Activated B cell treated with CpG ODN at 0.5 μM for 24 hours (primary cell): ENCODE measurements at regions of chr2 and their contacts with region 1.

Region 1: GRCh38 chr2:100562732-100563720 is at the start of gene PDCL3:
- DNase-seq: peak; percentile 98
- ATAC-seq: peak; percentile 89
- H3K4me3 Mint-ChIP-seq: peak within 1 kb of the TSS; percentile 90
- H3K27ac Mint-ChIP-seq: peak within 1 kb of the TSS; percentile 98
- H3K4me1 Mint-ChIP-seq: peaks cover 21% of the 10 kb centered on the region
- H3K27me3 Mint-ChIP-seq: no peaks in the 10 kb centered on the region
- CTCF ChIP-seq: no peak
- total RNA-seq, gene PDCL3: 26.1 and 27.8 TPM in 2 replicates

Region 2: GRCh38 chr2:100142393-100142792 is 420.6 kb before region 1 on chr2 and contains the start of gene AFF3:
- CTCF ChIA-PET with region 1: no interaction called
- POLR2A ChIA-PET with region 1: interaction called, 5 read pairs
- intact Hi-C with region 1: loop called (anchors 5 kb)
- DNase-seq: peak; percentile 65
- ATAC-seq: peak; percentile 86
- H3K4me3 Mint-ChIP-seq: peak within 1 kb of the TSS; percentile 99
- H3K27ac Mint-ChIP-seq: peak within 1 kb of the TSS; percentile 99
- H3K4me1 Mint-ChIP-seq: peaks cover 47% of the 10 kb centered on the region
- H3K27me3 Mint-ChIP-seq: no peaks in the 10 kb centered on the region
- CTCF ChIP-seq: no peak
- total RNA-seq, gene AFF3: 228 and 271 TPM in 2 replicates

Region 3: GRCh38 chr2:100237770-100238169 is 325.3 kb before region 1 on chr2:
- CTCF ChIA-PET with region 1: no interaction called
- POLR2A ChIA-PET with region 1: no interaction called
- intact Hi-C with region 1: no loop called
- DNase-seq: no peak
- ATAC-seq: no peak
- H3K4me3 Mint-ChIP-seq: no peak overlapping the region
- H3K27ac Mint-ChIP-seq: no peak overlapping the region
- H3K4me1 Mint-ChIP-seq: peaks cover 74% of the 10 kb centered on the region
- H3K27me3 Mint-ChIP-seq: peaks cover 10% of the 10 kb centered on the region
- CTCF ChIP-seq: no peak

Region 4: DNA sequence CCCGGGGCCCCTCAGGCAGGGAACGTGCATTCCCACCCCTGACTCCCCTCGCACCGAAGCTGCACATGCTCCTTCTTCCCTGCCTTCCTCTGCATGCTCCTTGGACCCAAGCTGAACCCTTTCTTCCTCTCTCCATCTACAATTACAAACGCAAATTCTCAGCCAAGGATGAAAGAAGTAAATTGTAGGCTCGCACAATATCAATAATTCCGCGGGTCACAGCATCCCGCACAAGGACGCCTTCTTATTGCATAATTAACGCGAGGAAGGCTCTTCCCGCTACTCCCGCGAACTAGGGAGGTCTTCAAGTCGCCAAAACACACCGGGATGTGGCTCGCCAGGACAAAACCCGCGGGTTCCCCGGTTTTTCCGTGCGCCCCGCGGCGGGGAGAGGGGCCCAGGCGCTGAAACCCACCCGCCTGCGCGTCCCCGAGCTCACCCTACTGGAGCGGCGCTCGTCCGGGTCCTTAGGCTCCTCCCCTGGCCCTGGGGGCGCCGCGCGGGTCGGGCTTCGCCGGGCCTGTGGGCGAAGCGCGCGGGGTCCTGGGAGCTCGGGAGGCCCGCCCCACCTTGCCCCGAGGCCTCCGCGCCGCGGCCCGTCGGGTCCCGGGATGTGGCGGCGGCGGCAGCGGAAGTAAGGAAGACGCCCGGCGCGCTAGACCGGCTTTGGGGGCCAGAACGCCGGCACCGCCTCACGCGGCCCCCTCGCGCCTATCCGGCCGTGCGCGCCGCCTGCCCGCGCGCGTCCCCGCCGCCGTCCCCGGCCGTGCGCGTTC is 145.9 kb before region 1 on chr2 and contains the start of gene CHST10:
- CTCF ChIA-PET with region 1: no interaction called
- POLR2A ChIA-PET with region 1: interaction called, 5 read pairs
- intact Hi-C with region 1: loop called (anchors 2 kb)
- DNase-seq: peak; percentile 74
- ATAC-seq: peak; percentile 96
- H3K4me3 Mint-ChIP-seq: peak within 1 kb of the TSS; percentile 94
- H3K27ac Mint-ChIP-seq: peak within 1 kb of the TSS; percentile 80
- H3K4me1 Mint-ChIP-seq: peaks cover 18% of the 10 kb centered on the region
- H3K27me3 Mint-ChIP-seq: no peaks in the 10 kb centered on the region
- CTCF ChIP-seq: no peak
- total RNA-seq, gene CHST10: 19.8 and 21.0 TPM in 2 replicates

Region 5: DNA sequence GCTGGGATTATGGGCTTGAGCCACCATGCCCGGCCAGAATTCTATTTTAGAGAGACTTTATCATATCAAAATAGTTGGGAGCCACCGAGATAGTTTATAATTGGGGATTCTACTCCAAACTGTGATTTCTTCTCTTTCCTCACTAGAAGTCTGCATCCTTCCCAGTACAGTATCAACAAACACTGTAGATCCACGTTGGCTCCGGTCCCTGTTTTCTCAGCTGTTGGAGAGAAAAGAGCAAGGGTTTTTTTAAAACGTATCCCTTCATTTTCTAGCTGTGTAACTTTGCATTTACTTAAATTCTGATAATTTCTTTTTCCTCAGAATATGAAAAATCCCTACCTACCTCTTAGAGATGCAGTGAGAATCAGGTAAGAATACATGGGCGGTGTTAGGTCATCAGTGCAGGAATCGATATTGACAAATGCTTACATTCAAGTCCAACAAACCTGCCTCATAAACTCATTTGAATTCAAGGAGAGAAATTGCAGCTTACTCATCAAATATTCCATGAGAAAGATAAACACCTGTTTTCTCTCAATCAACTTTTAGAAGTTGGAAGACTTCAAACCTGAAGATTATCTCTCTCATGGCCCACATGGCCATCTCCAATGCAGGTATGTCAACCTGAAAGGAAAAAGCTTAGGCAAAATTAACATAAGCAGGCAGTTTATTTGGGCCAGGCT is 18.0 kb before region 1 on chr2:
- CTCF ChIA-PET with region 1: no interaction called
- POLR2A ChIA-PET with region 1: no interaction called
- intact Hi-C with region 1: no loop called
- DNase-seq: no peak
- ATAC-seq: no peak
- H3K4me3 Mint-ChIP-seq: no peak overlapping the region
- H3K27ac Mint-ChIP-seq: no peak overlapping the region
- H3K4me1 Mint-ChIP-seq: no peaks in the 10 kb centered on the region
- H3K27me3 Mint-ChIP-seq: peaks cover 7% of the 10 kb centered on the region
- CTCF ChIP-seq: no peak

Region 6: GRCh38 chr2:100588071-100588786 is 25.2 kb after region 1 on chr2:
- CTCF ChIA-PET with region 1: no interaction called
- POLR2A ChIA-PET with region 1: interaction called, 20 read pairs
- intact Hi-C with region 1: no loop called
- DNase-seq: no peak
- ATAC-seq: peak; percentile 93
- H3K4me3 Mint-ChIP-seq: no peak overlapping the region
- H3K27ac Mint-ChIP-seq: peak overlapping the region; percentile 6
- H3K4me1 Mint-ChIP-seq: peaks cover 24% of the 10 kb centered on the region
- H3K27me3 Mint-ChIP-seq: no peaks in the 10 kb centered on the region
- CTCF ChIP-seq: no peak

Region 7: GRCh38 chr2:101252408-101253012 is 689.5 kb after region 1 on chr2 and contains the start of gene CNOT11:
- CTCF ChIA-PET with region 1: no interaction called
- POLR2A ChIA-PET with region 1: no interaction called
- intact Hi-C with region 1: loop called (anchors 1 kb)
- DNase-seq: peak; percentile 98
- ATAC-seq: peak; percentile 86
- H3K4me3 Mint-ChIP-seq: peak within 1 kb of the TSS; percentile 91
- H3K27ac Mint-ChIP-seq: peak within 1 kb of the TSS; percentile 94
- H3K4me1 Mint-ChIP-seq: peaks cover 41% of the 10 kb centered on the region
- H3K27me3 Mint-ChIP-seq: no peaks in the 10 kb centered on the region
- CTCF ChIP-seq: no peak
- total RNA-seq, gene CNOT11: 50.8 and 59.7 TPM in 2 replicates